ENCODE measurements at regions of chr1 and their contacts with region 1.

Region 1: GRCh38 chr1:2642560-2643413 is 10.0 kb upstream of the MMEL1 start:
- DNase-seq: peak; percentile 95
- ATAC-seq: peak; percentile 77
- H3K4me3 ChIP-seq: peak overlapping the region; percentile 38 to 91 (median 83)
- H3K4me3 Mint-ChIP-seq: peak overlapping the region; percentile 91
- H3K27ac ChIP-seq: peak overlapping the region; percentile 81 to 97
- H3K27ac Mint-ChIP-seq: peak overlapping the region; percentile 86
- H3K4me1 ChIP-seq: peaks cover 13 to 17% of the 10 kb centered on the region in 2 donors
- H3K4me1 Mint-ChIP-seq: peaks cover 12% of the 10 kb centered on the region
- H3K27me3 ChIP-seq: no peaks in the 10 kb centered on the region
- H3K27me3 Mint-ChIP-seq: no peaks in the 10 kb centered on the region
- CTCF ChIP-seq: no peak

Region 2: GRCh38 chr1:2525920-2526823 is 116.6 kb before region 1 on chr1 and contains the start of gene PANK4:
- CTCF ChIA-PET with region 1: no interaction called
- POLR2A ChIA-PET with region 1: no interaction called
- intact Hi-C with region 1: loop called (anchors 1 kb)
- DNase-seq: peak; percentile 94
- ATAC-seq: peak; percentile 91
- H3K4me3 ChIP-seq: peak within 1 kb of the TSS; percentile 48 to 96 (median 74)
- H3K4me3 Mint-ChIP-seq: peak within 1 kb of the TSS; percentile 96
- H3K27ac ChIP-seq: peak within 1 kb of the TSS; percentile 41 to 78
- H3K27ac Mint-ChIP-seq: peak within 1 kb of the TSS; percentile 85
- H3K4me1 ChIP-seq: peaks cover 41 to 53% of the 10 kb centered on the region in 2 donors
- H3K4me1 Mint-ChIP-seq: peaks cover 43% of the 10 kb centered on the region
- H3K27me3 ChIP-seq: peaks cover 0 to 24% (median 10%) of the 10 kb centered on the region in 4 experiments
- H3K27me3 Mint-ChIP-seq: no peaks in the 10 kb centered on the region
- CTCF ChIP-seq: no peak
- total RNA-seq, gene PANK4: 80.5 and 86.3 TPM in 2 replicates

Region 3: DNA sequence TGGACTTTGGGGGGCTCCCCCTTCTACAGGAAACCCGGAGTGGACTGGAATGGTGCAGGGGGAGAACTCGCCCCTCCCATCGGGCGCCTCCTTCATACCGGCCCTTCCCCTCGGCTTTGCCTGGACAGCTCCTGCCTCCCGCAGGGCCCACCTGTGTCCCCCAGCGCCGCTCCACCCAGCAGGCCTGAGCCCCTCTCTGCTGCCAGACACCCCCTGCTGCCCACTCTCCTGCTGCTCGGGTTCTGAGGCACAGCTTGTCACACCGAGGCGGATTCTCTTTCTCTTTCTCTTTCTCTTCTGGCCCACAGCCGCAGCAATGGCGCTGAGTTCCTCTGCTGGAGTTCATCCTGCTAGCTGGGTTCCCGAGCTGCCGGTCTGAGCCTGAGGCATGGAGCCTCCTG is 86.5 kb before region 1 on chr1 and contains the start of gene TNFRSF14:
- CTCF ChIA-PET with region 1: interaction called, 4 read pairs
- POLR2A ChIA-PET with region 1: interaction called, 5 read pairs
- intact Hi-C with region 1: loop called (anchors 1 kb)
- DNase-seq: peak; percentile 88
- ATAC-seq: peak; percentile 61
- H3K4me3 ChIP-seq: peak within 1 kb of the TSS; percentile 82 to 91 (median 85)
- H3K4me3 Mint-ChIP-seq: peak within 1 kb of the TSS; percentile 95
- H3K27ac ChIP-seq: peak within 1 kb of the TSS; percentile 87 to 99
- H3K27ac Mint-ChIP-seq: peak within 1 kb of the TSS; percentile 97
- H3K4me1 ChIP-seq: peaks cover 31 to 43% of the 10 kb centered on the region in 2 donors
- H3K4me1 Mint-ChIP-seq: peaks cover 48% of the 10 kb centered on the region
- H3K27me3 ChIP-seq: no peaks in the 10 kb centered on the region
- H3K27me3 Mint-ChIP-seq: no peaks in the 10 kb centered on the region
- CTCF ChIP-seq: peak; percentile 36
- total RNA-seq, gene TNFRSF14: 239 and 243 TPM in 2 replicates

Measured in B cell (primary cell).